Activated T-helper 1 cell treated with anti-CD3 and anti-CD28 coated beads, Interleukin-12 subunit alpha, Interleukin-12 subunit beta, Interleukin-2, Interleukin-4 antibody, amounts not matched to agents 30 ng/mL and 10 ng/mL and 1 ng/mL, durations not matched to agents 14 hours and 24 hours and 36 hours (primary cell): ENCODE measurements at regions of chr17 and their contacts with region 1.

Region 1: DNA sequence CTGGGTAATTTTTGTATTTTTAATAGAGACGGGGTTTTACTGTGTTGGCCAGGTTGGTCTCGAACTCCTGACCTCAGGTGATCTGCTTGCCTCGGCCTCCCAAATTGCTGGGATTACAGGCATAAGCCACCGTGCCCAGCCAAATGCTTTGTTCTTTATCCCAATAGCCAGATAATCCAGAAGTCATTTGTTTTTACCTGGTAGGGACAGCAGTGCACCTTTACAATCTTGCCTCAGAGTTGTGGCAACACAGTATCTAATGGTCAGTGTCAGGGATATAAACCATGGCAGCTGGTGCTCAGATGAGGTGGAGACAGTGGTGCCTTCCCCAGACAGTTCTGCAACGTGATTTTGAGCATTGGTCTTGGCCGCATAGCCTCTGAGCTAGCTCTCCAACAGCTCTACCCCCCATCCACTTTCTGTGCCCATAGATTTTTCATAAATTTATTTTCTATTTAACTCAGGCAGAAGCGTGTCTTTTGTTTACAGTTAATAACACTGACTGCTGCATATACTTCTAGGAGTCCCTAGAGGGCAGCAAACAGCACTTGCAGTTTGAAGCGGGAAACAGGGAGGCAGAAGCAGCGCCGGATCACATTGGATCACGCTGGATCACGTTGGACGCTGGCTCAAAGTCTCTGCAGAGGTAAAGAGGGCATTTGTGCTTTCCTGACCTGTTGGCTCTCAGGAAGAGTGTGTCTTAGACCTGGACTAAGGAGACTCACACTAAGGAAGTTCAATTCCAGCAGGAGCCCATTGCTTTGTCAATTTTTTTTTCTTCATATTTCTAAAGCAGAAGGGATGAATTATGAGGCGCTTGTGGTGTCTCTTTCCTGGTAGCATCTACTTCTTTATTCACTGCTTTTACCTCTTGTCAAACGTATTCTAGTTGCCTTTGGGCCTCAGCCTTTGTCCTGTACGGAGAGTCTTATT is 5.1 kb upstream of the GGT6 start:
- DNase-seq: peak; percentile 38
- H3K4me3 Mint-ChIP-seq: no peak overlapping the region
- H3K27ac Mint-ChIP-seq: peak overlapping the region; percentile 13
- H3K4me1 Mint-ChIP-seq: peaks cover 48% of the 10 kb centered on the region
- H3K27me3 Mint-ChIP-seq: peaks cover 8% of the 10 kb centered on the region

Region 2: GRCh38 chr17:4375039-4375748 is 190.3 kb before region 1 on chr17:
- intact Hi-C with region 1: loop called (anchors 5 kb)
- DNase-seq: peak; percentile 60
- H3K4me3 Mint-ChIP-seq: peak overlapping the region; percentile 60
- H3K27ac Mint-ChIP-seq: peak overlapping the region; percentile 89
- H3K4me1 Mint-ChIP-seq: peaks cover 32% of the 10 kb centered on the region
- H3K27me3 Mint-ChIP-seq: no peaks in the 10 kb centered on the region

Region 3: GRCh38 chr17:4554997-4555799 is 10.3 kb before region 1 on chr17 and contains the start of gene MYBBP1A:
- intact Hi-C with region 1: loop called (anchors 1 kb)
- DNase-seq: peak; percentile 96
- H3K4me3 Mint-ChIP-seq: peak within 1 kb of the TSS; percentile 94
- H3K27ac Mint-ChIP-seq: peak within 1 kb of the TSS; percentile 93
- H3K4me1 Mint-ChIP-seq: peaks cover 29% of the 10 kb centered on the region
- H3K27me3 Mint-ChIP-seq: no peaks in the 10 kb centered on the region
- total RNA-seq, gene MYBBP1A: 186 and 195 TPM in 2 replicates

Region 4: DNA sequence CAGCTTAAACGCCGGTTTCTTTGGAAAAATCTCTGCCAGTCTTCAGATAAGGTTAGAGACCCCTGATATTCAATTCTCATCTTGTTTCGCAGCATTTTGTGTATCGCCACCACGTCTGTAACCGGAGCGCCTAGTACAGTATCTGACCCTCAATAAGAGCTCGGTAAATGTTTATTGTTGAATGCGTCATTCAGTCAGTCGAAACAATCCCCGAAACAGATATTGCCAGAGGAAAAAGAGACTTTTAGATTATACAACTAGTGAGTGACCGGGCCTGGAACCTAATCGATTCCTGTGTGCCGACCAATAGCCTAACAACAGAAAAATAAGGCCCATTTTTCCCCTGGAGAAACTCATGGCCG is 137.8 kb after region 1 on chr17:
- intact Hi-C with region 1: loop called (anchors 5 kb)
- DNase-seq: no peak
- H3K4me3 Mint-ChIP-seq: peak overlapping the region; percentile 90
- H3K27ac Mint-ChIP-seq: peak overlapping the region; percentile 69
- H3K4me1 Mint-ChIP-seq: peaks cover 48% of the 10 kb centered on the region
- H3K27me3 Mint-ChIP-seq: no peaks in the 10 kb centered on the region

Region 5: GRCh38 chr17:4891411-4892342 is 326.2 kb after region 1 on chr17:
- intact Hi-C with region 1: loop called (anchors 1 kb)
- DNase-seq: no peak
- H3K4me3 Mint-ChIP-seq: no peak overlapping the region
- H3K27ac Mint-ChIP-seq: no peak overlapping the region
- H3K4me1 Mint-ChIP-seq: peaks cover 5% of the 10 kb centered on the region
- H3K27me3 Mint-ChIP-seq: no peaks in the 10 kb centered on the region

Region 6: DNA sequence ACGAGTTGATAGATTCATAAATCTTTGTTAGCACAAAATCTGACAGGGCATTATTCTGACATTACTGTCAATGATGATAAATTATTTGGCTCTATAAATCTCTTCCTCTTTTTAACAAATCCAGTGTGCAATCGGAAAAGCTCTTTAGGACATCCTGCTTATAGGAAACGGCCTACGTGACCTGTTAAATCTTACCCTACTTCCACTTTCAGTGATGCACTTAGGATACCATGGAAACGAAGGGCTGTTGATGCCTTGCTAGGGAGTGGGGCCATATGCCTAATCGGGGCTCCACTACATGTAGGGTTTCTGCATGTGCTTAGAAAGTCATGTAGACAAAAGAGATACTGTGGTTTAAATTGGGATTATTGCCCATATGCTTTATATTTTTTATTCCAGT is 599.0 kb after region 1 on chr17:
- intact Hi-C with region 1: no loop called
- DNase-seq: no peak
- H3K4me3 Mint-ChIP-seq: no peak overlapping the region
- H3K27ac Mint-ChIP-seq: no peak overlapping the region
- H3K4me1 Mint-ChIP-seq: no peaks in the 10 kb centered on the region
- H3K27me3 Mint-ChIP-seq: peaks cover 9% of the 10 kb centered on the region